ENCODE measurements at regions of chr1 and their contacts with region 1.

Region 1: GRCh38 chr1:172002725-172003345 is 161.5 kb downstream of the DNM3 start:
- DNase-seq: peak; percentile 12
- CTCF ChIP-seq: peak; percentile 71

Region 2: DNA sequence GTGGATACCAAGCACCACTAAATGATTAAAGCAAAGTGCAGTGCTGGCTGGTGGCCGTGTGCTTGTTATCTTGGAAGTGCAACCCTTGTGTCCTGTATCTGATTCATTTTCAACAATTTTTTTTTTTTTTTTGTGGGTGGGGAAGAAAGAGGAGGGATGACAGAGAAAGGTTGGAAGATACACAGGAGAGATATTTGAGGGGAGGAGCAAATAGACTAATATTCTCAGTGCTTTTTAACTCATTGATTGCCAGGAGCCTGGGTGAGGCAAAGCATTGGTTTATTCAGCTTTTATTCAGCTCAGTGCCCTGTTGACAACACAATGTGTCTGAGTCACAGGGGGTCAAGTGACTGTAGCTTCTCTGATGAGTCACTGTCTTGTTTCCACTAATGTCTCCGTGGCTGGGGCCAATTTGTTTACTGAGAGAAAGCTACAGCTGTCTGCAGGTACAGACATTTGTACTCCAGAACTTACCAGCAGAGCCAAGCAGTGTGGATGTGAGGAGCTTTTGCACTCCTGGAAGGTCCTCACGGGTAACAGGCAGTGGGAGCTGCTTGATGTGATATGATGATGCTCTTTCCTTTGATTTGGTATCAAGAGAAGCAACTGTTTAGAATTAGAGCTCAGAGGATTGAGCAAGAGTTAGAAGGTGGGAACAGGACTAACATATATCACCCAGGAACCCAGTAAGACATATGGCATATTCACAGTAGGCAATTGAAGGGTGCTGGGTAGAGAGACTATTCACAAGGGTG is 185.1 kb before region 1 on chr1:
- CTCF ChIA-PET with region 1: no interaction called
- POLR2A ChIA-PET with region 1: no interaction called
- DNase-seq: peak; percentile 31
- CTCF ChIP-seq: no peak

Region 3: DNA sequence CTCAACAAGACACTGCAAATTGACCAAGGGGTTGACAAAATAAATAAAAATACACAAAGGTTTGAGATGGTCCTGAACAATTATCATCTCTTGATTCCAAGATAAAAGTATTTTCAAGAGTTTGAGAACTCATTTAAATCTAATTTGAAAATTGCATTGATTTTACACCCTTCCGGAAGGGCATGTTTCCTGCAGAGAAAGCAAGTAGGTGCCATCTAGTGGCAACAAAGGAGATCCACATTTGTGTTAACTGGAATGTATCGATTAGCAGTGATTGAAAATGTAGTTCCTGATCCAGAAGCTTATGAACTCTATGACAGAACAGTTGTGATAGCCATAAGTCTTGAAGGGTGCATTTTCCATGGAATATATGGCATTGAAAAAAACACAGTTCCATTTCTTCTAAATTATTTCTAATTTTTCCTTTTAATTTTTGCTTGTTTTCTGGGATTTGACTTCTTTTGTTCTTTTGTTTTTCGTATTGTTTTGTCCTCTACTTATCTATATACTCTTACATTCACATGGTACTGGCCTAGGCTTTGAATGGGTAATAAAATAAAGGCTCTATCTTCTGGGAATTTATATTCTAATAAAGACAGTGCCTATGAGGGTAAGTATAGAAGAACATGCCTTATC is 17.9 kb before region 1 on chr1:
- CTCF ChIA-PET with region 1: interaction called, 19 read pairs
- POLR2A ChIA-PET with region 1: no interaction called
- DNase-seq: peak; percentile 36
- CTCF ChIP-seq: peak; percentile 72